AG04449 (cell line): ENCODE measurements at regions of chr13 and their contacts with region 1.

Region 1: GRCh38 chr13:95536632-95537241 is 15.8 kb upstream of the CLDN10 start:
- DNase-seq: no peak
- H3K4me3 ChIP-seq: no peak overlapping the region
- CTCF ChIP-seq: peak; percentile 4

Region 2: GRCh38 chr13:95512957-95513356 is 23.8 kb before region 1 on chr13:
- CTCF ChIA-PET with region 1: interaction called, 10 read pairs
- POLR2A ChIA-PET with region 1: no interaction called
- DNase-seq: no peak
- H3K4me3 ChIP-seq: no peak overlapping the region
- CTCF ChIP-seq: no peak

Region 3: DNA sequence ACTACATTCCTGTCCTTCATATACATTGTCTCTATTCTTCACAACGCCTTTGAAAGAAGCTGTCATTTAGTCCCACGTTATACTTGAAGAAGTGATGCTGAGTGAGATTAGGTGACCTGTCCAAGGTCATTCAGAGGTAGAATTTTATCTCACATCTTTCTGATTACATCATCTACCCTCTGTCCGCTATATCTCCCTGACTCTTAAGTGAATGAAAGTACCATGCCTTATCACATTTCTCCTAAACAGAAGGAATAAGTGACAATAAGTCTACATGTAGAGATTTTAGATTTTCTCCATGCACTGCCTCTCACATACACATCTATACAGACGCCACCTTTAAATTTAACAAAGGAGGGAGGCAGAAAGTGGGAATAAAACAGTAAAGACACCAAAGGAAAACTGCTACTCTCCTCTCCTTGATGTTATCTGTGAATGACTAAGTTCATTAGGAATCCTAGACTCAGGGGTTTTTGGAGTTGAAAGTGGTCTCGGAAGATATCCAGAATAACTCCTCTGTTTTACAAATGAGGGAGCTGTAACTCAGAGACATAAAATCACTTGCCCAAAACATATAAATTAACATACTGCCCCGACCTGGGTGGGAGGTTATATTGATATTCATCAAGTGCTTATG is 10.9 kb after region 1 on chr13:
- CTCF ChIA-PET with region 1: interaction called, 12 read pairs
- POLR2A ChIA-PET with region 1: no interaction called
- DNase-seq: no peak
- H3K4me3 ChIP-seq: no peak overlapping the region
- CTCF ChIP-seq: no peak